ENCODE measurements at regions of chr7 and their contacts with region 1.

Region 1: DNA sequence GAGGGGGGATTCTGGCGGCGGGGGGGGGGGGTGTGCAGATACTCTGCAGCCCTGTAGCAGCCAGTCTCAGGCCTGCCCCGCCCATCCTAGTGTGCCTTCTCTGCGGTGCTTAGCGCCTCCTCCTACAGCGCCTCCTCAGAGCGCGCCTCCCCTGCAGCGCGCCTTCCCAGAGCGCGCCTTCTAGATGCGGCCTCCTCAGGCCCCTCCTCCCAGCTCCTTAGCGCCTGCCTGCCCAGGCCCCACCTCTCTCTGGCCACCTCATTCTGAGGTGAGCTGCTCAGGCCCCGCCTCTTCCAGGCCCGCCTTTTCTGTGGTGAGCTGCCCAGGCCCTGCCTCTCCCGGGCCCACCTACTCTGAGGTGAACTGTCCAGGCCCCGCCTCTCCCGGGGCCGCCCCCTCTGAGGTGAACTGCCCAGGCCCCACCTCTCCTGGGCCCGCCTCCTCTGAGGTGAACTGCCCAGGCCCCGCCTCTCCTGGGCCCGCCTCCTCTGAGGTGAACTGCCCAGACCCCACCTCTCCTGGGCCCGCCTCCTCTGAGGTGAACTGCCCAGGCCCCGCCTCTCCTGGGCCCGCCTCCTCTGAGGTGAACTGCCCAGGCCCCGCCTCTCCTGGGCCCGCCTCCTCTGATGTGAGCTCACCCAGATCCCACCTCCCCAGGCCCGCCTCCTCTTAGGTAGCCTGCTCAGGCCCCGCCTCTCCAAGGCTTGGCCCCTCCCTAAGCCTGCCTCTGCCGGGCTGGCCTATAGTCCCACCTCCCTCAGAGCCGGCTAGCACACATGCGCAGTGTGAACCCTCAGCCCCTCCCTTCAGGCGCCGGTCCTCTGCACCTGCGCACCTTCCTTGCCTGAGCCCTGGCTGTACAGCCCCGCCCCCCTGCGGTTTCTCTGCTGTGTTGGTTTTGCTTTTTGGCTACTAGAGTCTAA is 2.1 kb upstream of the SGCE start:
- DNase-seq: peak; percentile 97
- H3K4me3 ChIP-seq: peak overlapping the region; percentile 28 to 84 (median 72)
- H3K27ac ChIP-seq: peak overlapping the region; percentile 75 to 89 (median 86)
- H3K4me1 ChIP-seq: peaks cover 0 to 19% (median 11%) of the 10 kb centered on the region in 4 donors
- H3K27me3 ChIP-seq: no peaks in the 10 kb centered on the region
- CTCF ChIP-seq: no peak
- EP300 ChIP-seq: no peak
- POLR2A ChIP-seq: no peak

Region 2: DNA sequence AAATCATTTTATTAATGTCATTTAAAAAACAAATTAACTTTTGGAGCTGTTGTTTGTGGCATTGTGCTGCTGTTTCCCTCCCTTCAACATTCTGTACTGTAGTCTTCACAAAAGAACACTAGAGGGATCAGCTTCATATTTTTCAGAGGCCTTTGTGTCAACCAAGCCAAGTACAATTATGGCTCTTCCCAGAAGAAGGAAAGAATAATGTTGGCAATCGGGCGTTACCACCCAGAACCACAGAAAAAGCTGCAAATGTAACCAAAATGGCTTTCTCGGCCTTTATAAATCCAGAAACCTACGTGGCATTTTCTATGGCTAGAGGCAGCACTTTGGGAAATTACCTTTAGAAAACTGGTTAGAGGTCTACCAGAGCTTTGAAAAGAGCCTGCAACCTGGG is 362.2 kb before region 1 on chr7:
- intact Hi-C with region 1: loop called (anchors 10 kb)
- DNase-seq: no peak
- H3K4me3 ChIP-seq: peak overlapping the region in 3 of 4 donors; percentile 22 to 40 (median 32)
- H3K27ac ChIP-seq: peak overlapping the region; percentile 78 to 93 (median 88)
- H3K4me1 ChIP-seq: peaks cover 0 to 54% (median 32%) of the 10 kb centered on the region in 4 donors
- H3K27me3 ChIP-seq: no peaks in the 10 kb centered on the region
- CTCF ChIP-seq: peak; percentile 56 to 82 (median 68)
- EP300 ChIP-seq: peak in 1 of 4 donors; percentile 15
- POLR2A ChIP-seq: no peak

Region 3: DNA sequence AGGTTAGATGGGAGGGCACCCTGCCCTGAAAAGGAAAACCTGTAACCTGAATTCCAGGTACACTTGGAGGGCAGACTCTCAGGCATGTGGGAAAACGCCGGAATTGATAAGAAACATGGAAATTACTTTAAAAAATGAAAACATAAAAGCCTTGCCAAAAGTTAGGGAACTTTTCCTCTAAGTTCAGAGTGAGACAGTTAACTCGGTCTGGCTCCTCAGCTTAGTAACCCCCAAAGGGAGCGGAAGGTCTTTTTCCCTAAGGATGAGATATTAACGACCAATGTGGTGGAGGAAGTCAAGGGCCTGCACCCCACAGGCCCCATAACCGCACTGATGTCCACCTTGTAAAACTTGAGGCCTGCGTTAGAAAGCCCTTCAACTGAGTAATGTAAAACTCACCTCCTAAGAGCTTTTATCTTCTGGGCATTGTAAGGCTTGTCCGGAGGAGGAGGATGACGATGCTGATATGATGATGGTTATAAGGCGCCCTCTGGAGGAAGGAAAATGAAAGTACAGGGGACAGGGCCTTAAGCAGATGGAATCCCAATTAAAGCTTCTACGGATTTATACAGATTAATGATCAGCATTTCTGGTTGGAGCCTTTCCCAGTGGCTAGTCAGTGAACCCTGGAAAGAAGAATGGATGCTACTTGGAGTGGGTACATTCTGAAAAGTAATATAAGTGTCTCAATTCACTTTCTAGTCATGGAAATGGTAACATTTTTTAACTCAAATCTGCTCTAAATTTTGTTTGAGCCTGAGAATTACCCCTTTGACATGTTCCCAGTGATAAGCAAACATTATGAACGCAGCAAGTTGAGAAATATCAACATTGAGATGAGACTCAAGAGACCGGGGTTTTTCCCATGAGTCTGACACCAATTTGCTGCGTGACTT is 262.6 kb before region 1 on chr7:
- intact Hi-C with region 1: loop called (anchors 5 kb)
- DNase-seq: peak; percentile 88
- H3K4me3 ChIP-seq: peak overlapping the region; percentile 52 to 72 (median 61)
- H3K27ac ChIP-seq: peak overlapping the region; percentile 89 to 94 (median 92)
- H3K4me1 ChIP-seq: peaks cover 0 to 66% (median 54%) of the 10 kb centered on the region in 4 donors
- H3K27me3 ChIP-seq: no peaks in the 10 kb centered on the region
- CTCF ChIP-seq: peak; percentile 80 to 96 (median 88)
- EP300 ChIP-seq: no peak
- POLR2A ChIP-seq: peak in 1 of 2 donors; percentile 6

Region 4: DNA sequence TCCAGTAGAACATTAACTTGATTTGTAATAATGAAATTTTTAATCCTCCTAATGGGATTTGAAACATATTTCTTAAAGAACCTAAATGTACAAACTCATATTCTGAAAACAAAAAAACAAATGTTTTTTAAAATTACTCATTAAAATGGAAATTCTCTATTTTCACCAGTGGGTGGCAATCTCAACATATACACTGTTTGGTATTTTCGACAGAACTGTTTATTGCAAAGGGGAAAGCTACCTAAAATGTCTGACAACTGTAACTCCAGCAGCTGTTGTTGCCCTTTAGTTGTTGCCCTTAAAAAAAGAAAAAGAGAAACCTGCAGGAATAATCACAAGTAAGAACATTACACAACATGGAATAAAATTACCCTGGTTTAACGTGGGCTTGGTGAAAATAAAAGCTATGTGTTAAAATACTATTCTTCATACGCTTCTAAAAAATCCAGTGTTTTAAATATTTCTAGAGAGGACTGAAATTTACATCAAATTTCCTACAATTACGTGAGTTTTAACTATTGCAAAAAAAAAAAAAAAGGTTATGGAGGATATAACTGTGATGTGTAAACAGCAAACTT is 208.8 kb before region 1 on chr7:
- intact Hi-C with region 1: loop called (anchors 2 kb)
- DNase-seq: no peak
- H3K4me3 ChIP-seq: no peak overlapping the region
- H3K27ac ChIP-seq: no peak overlapping the region
- H3K4me1 ChIP-seq: peaks cover 0 to 39% (median 20%) of the 10 kb centered on the region in 4 donors
- H3K27me3 ChIP-seq: no peaks in the 10 kb centered on the region
- CTCF ChIP-seq: peak in 3 of 4 experiments; percentile 46 to 67 (median 66)
- EP300 ChIP-seq: no peak
- POLR2A ChIP-seq: no peak

Region 5: GRCh38 chr7:94509879-94510581 is 148.0 kb before region 1 on chr7:
- intact Hi-C with region 1: loop called (anchors 2 kb)
- DNase-seq: peak; percentile 77
- H3K4me3 ChIP-seq: peak overlapping the region; percentile 75 to 96 (median 82)
- H3K27ac ChIP-seq: peak overlapping the region; percentile 89 to 93 (median 91)
- H3K4me1 ChIP-seq: peaks cover 0 to 38% (median 21%) of the 10 kb centered on the region in 4 donors
- H3K27me3 ChIP-seq: no peaks in the 10 kb centered on the region
- CTCF ChIP-seq: no peak
- EP300 ChIP-seq: no peak
- POLR2A ChIP-seq: peak in 1 of 2 donors; percentile 18

Region 6: GRCh38 chr7:94710256-94710655 is 52.2 kb after region 1 on chr7:
- intact Hi-C with region 1: no loop called
- DNase-seq: no peak
- H3K4me3 ChIP-seq: no peak overlapping the region
- H3K27ac ChIP-seq: no peak overlapping the region
- H3K4me1 ChIP-seq: no peaks in the 10 kb centered on the region
- H3K27me3 ChIP-seq: no peaks in the 10 kb centered on the region
- CTCF ChIP-seq: no peak
- EP300 ChIP-seq: no peak
- POLR2A ChIP-seq: no peak

Region 7: DNA sequence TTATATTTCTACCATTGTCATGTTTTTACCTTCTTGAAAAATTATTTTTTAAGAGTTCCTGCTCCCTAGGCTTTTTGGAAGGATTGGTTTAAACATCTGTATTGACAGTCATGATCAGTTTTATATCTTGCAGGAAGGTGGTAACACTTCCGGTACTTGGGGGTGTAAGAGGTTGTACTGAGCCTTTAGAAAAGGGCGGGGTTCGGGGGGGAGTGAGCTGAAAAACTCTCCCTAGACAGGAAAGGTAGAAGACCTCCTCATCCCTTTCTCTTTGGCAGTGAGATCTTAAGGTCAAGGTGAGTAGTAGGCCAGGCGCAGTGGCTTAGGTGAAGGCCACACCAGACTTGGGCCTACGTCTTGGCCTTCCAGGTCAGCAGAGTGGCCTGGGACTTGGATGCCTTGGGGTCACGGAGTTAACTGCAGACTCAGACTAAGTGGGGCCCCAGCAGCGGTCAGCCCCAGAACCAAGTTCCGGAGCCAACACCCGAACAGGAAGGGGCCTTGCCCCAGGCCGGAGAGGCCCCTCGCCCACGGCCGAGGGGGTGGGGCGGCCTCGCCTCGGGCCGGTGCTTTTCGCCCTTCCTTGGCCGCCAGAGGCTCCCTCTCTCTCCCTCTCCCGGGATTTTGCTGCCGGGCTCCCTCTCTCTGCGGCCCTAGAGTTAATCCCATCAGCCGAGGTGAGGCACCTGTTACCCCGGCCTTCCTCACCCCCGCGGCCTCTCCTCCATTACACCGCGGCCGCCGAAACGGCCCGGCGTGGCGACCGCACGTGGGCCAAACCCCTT is 249.2 kb after region 1 on chr7 and contains the start of gene PPP1R9A:
- intact Hi-C with region 1: loop called (anchors 5 kb)
- DNase-seq: peak; percentile 66
- H3K4me3 ChIP-seq: peak within 1 kb of the TSS; percentile 47 to 76 (median 67)
- H3K27ac ChIP-seq: peak within 1 kb of the TSS; percentile 79 to 90 (median 84)
- H3K4me1 ChIP-seq: peaks cover 0 to 35% (median 12%) of the 10 kb centered on the region in 4 donors
- H3K27me3 ChIP-seq: no peaks in the 10 kb centered on the region
- CTCF ChIP-seq: peak in 3 of 4 experiments; percentile 27 to 43 (median 35)
- EP300 ChIP-seq: no peak
- POLR2A ChIP-seq: no peak
- total RNA-seq, gene PPP1R9A: 43.5 to 51.3 (median 46.1) TPM

Region 8: GRCh38 chr7:95199779-95200558 is 541.9 kb after region 1 on chr7:
- intact Hi-C with region 1: loop called (anchors 2 kb)
- DNase-seq: peak; percentile 64
- H3K4me3 ChIP-seq: no peak overlapping the region
- H3K27ac ChIP-seq: no peak overlapping the region
- H3K4me1 ChIP-seq: no peaks in the 10 kb centered on the region
- H3K27me3 ChIP-seq: no peaks in the 10 kb centered on the region
- CTCF ChIP-seq: peak; percentile 48 to 66 (median 62)
- EP300 ChIP-seq: no peak
- POLR2A ChIP-seq: no peak